ENCODE measurements at regions of chr11 and their contacts with region 1.

Region 1: DNA sequence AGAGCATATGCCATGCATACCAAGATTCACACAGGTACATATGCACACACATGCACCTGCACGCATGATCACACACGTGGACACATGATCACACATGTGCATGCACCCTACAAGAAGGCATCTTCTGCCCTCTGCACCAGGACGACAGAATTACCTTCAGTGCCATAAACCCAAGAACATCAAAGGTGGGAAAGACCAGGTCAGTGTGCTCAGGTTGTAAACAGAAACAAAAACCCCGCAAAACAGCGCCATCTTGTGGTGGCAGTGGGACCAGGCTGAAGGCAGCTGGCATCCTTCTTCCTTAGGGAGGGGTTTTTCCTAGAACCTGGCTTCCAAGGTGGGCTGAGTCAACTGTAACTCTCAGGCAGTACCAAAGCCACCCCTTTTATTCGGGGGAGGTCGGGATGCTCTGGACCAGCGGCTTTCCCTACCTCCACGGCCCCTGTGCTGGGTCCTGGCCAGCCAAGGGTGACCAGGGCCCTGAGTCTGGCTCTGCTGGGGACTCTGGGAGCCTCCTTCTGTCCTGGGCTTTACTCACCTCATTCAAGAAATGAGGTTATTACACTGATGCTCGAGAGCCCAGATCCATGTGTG is 69.4 kb upstream of the FGF3 start:
- DNase-seq: peak; percentile 79
- H3K4me3 ChIP-seq: no peak overlapping the region
- H3K27ac ChIP-seq: no peak overlapping the region
- H3K4me1 ChIP-seq: no peaks in the 10 kb centered on the region
- H3K27me3 ChIP-seq: peaks cover 5% of the 10 kb centered on the region
- CTCF ChIP-seq: peak; percentile 99

Region 2: GRCh38 chr11:70090961-70091381 is 202.4 kb after region 1 on chr11:
- CTCF ChIA-PET with region 1: no interaction called
- POLR2A ChIA-PET with region 1: interaction called, 20 read pairs
- intact Hi-C with region 1: no loop called
- DNase-seq: peak; percentile 71
- H3K4me3 ChIP-seq: no peak overlapping the region
- H3K27ac ChIP-seq: peak overlapping the region; percentile 22
- H3K4me1 ChIP-seq: peaks cover 18% of the 10 kb centered on the region
- H3K27me3 ChIP-seq: no peaks in the 10 kb centered on the region
- CTCF ChIP-seq: no peak

Measured in A673 (cell line).